ENCODE measurements at regions of chr11 and their contacts with region 1.

Region 1: DNA sequence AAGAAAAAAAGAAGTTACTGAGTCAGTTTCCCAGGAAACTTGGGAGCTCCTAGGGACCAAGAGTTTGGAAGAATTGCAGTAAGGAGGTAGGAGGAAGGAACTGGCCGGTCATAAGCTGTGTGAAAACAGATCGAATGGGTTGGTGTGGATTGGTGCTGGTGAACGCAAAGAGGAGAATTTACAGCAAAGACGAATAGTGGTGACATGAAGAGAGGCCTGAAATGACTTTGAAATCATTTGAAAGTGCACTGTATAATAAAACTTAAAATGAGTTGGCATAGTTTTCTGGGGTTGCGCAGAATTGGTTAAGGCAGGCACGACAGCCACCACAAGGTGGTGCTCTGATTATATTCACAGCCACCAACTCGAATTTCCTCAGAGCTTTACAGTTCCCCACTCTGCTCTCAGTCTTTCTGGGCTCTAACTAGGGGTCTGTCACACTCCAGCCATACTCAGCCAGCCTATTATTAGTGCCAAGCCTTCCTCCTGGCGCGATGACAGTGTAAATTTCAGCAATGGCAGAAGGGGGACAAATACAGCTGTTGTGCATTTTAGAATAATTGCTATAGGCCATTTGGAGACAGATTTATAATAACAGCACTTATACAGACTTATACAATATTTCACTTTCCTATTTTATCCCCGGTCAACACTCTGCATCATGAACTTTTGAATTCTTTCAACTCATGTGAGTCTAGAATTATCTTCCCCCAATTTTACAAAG is 8.3 kb upstream of the HTR3B start:
- DNase-seq: peak in 8 of 9 experiments; percentile 18 to 62 (median 35)
- ATAC-seq: peak; percentile 42
- H3K4me3 ChIP-seq: no peak overlapping the region
- H3K4me3 Mint-ChIP-seq: no peak overlapping the region
- H3K27ac ChIP-seq: no peak overlapping the region
- H3K27ac Mint-ChIP-seq: no peak overlapping the region
- H3K4me1 ChIP-seq: no peaks in the 10 kb centered on the region
- H3K4me1 Mint-ChIP-seq: peaks cover 2% of the 10 kb centered on the region
- H3K27me3 ChIP-seq: no peaks in the 10 kb centered on the region
- H3K27me3 Mint-ChIP-seq: no peaks in the 10 kb centered on the region
- CTCF ChIP-seq: peak; percentile 70

Region 2: GRCh38 chr11:113884361-113884836 is 11.9 kb before region 1 on chr11:
- CTCF ChIA-PET with region 1: interaction called, 11 read pairs
- POLR2A ChIA-PET with region 1: no interaction called
- intact Hi-C with region 1: no loop called
- DNase-seq: no peak
- ATAC-seq: no peak
- H3K4me3 ChIP-seq: no peak overlapping the region
- H3K4me3 Mint-ChIP-seq: no peak overlapping the region
- H3K27ac ChIP-seq: no peak overlapping the region
- H3K27ac Mint-ChIP-seq: no peak overlapping the region
- H3K4me1 ChIP-seq: no peaks in the 10 kb centered on the region
- H3K4me1 Mint-ChIP-seq: no peaks in the 10 kb centered on the region
- H3K27me3 ChIP-seq: no peaks in the 10 kb centered on the region
- H3K27me3 Mint-ChIP-seq: no peaks in the 10 kb centered on the region
- CTCF ChIP-seq: no peak

Region 3: GRCh38 chr11:114059278-114059983 is 163.1 kb after region 1 on chr11 and contains the start of gene ZBTB16:
- CTCF ChIA-PET with region 1: no interaction called
- POLR2A ChIA-PET with region 1: no interaction called
- intact Hi-C with region 1: no loop called
- DNase-seq: peak in 8 of 9 experiments; percentile 50 to 79 (median 64)
- ATAC-seq: peak; percentile 67
- H3K4me3 ChIP-seq: peak within 1 kb of the TSS; percentile 56 to 70
- H3K4me3 Mint-ChIP-seq: peak within 1 kb of the TSS; percentile 89
- H3K27ac ChIP-seq: peak within 1 kb of the TSS in 1 of 2 experiments; percentile 31
- H3K27ac Mint-ChIP-seq: peak within 1 kb of the TSS; percentile 79
- H3K4me1 ChIP-seq: peaks cover 21% of the 10 kb centered on the region
- H3K4me1 Mint-ChIP-seq: peaks cover 9% of the 10 kb centered on the region
- H3K27me3 ChIP-seq: peaks cover 3 to 14% of the 10 kb centered on the region in 2 experiments
- H3K27me3 Mint-ChIP-seq: peaks cover 21% of the 10 kb centered on the region
- CTCF ChIP-seq: no peak
- total RNA-seq, gene ZBTB16: 15.3 to 18.3 TPM

Region 4: DNA sequence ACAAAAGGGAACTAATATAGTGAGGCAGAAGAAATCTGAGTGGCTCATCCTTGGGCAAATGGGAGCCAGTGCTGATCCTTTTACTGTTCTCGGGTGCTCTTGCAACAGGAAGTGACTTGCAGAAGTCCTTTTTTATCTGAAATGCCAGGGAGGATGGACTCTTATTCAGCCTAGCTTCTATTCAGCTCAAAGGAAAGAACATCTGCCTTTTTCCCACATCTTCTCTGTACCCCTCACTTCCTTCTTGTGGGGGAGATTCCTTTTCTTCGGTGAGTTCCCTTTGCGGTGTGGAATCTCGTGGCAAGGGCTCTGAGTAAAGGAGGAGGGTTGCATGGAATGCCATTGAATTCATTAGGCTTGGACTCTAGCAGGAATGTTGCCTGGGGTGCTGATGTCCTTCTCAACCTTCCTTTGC is 239.4 kb after region 1 on chr11:
- CTCF ChIA-PET with region 1: no interaction called
- POLR2A ChIA-PET with region 1: no interaction called
- intact Hi-C with region 1: no loop called
- DNase-seq: peak in 1 of 9 experiments; percentile 20
- ATAC-seq: no peak
- H3K4me3 ChIP-seq: no peak overlapping the region
- H3K4me3 Mint-ChIP-seq: no peak overlapping the region
- H3K27ac ChIP-seq: no peak overlapping the region
- H3K27ac Mint-ChIP-seq: no peak overlapping the region
- H3K4me1 ChIP-seq: no peaks in the 10 kb centered on the region
- H3K4me1 Mint-ChIP-seq: peaks cover 53% of the 10 kb centered on the region
- H3K27me3 ChIP-seq: no peaks in the 10 kb centered on the region
- H3K27me3 Mint-ChIP-seq: no peaks in the 10 kb centered on the region
- CTCF ChIP-seq: no peak

Region 5: DNA sequence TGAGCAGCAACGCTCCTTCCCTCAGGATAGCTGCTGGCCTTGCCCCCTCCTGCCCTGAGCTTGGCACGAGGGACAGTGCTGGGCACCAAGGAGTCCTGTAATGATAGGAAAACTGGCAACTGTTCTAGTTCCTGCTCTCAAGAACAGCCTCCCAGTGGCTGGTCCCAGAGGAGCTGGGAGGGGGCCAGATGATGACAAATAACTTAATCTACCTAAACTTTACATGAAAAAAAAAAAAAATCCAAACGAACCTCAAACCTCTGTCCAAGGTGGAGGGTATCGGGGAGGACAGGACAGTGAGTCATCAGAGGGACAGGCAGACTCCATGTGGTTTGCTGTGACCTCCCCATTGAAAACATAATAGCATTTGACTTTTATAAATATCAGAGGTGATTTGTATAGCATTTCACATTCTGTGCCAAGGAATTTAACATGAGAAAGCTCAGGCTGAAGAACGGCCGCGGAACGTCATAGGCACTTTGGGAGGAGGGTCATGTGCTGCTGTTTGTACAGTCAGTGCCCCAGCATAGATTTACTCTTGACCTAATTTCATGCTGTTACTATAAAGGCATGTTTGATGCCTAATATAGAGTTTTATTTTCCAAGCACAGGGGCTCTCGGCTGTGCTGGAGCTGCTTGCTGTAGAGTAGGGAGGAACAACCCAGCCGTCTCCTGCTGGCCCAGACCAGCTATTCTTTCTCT is 301.6 kb after region 1 on chr11:
- CTCF ChIA-PET with region 1: interaction called, 7 read pairs
- POLR2A ChIA-PET with region 1: no interaction called
- intact Hi-C with region 1: loop called (anchors 1 to 5 kb)
- DNase-seq: no peak
- ATAC-seq: no peak
- H3K4me3 ChIP-seq: no peak overlapping the region
- H3K4me3 Mint-ChIP-seq: no peak overlapping the region
- H3K27ac ChIP-seq: no peak overlapping the region
- H3K27ac Mint-ChIP-seq: peak overlapping the region; percentile 22
- H3K4me1 ChIP-seq: no peaks in the 10 kb centered on the region
- H3K4me1 Mint-ChIP-seq: peaks cover 24% of the 10 kb centered on the region
- H3K27me3 ChIP-seq: no peaks in the 10 kb centered on the region
- H3K27me3 Mint-ChIP-seq: no peaks in the 10 kb centered on the region
- CTCF ChIP-seq: no peak

Measured in CD8-positive, alpha-beta T cell (primary cell).